Activated B cell treated with CpG ODN at 0.5 μM for 24 hours (primary cell): ENCODE measurements at regions of chr14 and their contacts with region 1.

Region 1: GRCh38 chr14:73491256-73492042 is 716 bp downstream of the RIOX1 start:
- DNase-seq: no peak
- ATAC-seq: peak; percentile 51
- H3K4me3 Mint-ChIP-seq: peak overlapping the region; percentile 88
- H3K27ac Mint-ChIP-seq: peak overlapping the region; percentile 80
- H3K4me1 Mint-ChIP-seq: peaks cover 49% of the 10 kb centered on the region
- H3K27me3 Mint-ChIP-seq: no peaks in the 10 kb centered on the region
- CTCF ChIP-seq: no peak

Region 2: GRCh38 chr14:73136387-73137225 is 354.8 kb before region 1 on chr14 and contains the start of gene PSEN1:
- CTCF ChIA-PET with region 1: no interaction called
- POLR2A ChIA-PET with region 1: interaction called, 3 read pairs
- intact Hi-C with region 1: loop called (anchors 1 kb)
- DNase-seq: peak; percentile 99
- ATAC-seq: peak; percentile 92
- H3K4me3 Mint-ChIP-seq: peak within 1 kb of the TSS; percentile 95
- H3K27ac Mint-ChIP-seq: peak within 1 kb of the TSS; percentile 98
- H3K4me1 Mint-ChIP-seq: peaks cover 33% of the 10 kb centered on the region
- H3K27me3 Mint-ChIP-seq: no peaks in the 10 kb centered on the region
- CTCF ChIP-seq: no peak
- total RNA-seq, gene PSEN1: 38.6 and 42.9 TPM in 2 replicates

Region 3: DNA sequence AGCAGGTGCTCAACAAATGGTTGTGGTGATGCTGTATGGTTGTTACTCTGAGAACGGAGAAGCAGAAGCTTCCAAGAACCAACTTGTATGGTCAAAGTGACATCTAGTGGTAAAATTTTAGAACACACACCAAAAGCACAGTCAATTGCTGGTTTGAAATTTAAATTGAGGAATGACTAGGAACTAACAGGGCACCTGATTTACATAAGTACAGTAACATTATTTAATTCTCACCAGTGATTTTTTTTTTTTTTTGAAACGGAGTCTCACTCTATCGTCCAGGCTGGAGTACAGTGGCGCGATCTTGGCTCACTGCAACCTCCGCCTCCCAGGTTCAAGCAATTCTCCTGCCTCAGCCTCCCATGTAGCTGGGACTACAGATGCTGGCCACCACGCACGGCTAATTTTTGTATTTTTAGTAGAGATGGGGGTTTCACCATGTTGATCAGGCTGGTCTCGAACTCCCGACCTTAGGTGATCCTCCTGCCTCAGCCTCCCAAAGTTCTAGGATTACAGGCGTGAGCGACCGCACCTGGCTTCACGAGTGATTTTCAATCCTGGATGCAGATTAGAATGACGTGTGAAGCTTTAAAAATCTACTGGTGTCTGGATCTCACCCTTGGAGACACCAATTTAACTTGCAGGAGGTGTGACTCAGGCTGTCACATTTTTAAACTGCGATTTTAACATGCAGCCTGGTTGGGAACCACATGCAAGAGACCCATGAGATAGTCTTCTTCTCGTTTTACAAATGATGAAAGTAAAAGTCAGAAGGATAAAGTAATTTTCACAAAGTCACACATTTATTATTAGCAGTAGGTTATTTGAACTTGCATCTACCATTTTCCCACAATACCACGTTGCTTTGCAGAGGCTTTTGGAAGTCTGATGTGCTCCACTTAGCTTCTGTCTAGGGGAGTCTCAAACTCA is 19.0 kb before region 1 on chr14:
- CTCF ChIA-PET with region 1: no interaction called
- POLR2A ChIA-PET with region 1: interaction called, 17 read pairs
- intact Hi-C with region 1: no loop called
- DNase-seq: no peak
- ATAC-seq: peak; percentile 93
- H3K4me3 Mint-ChIP-seq: no peak overlapping the region
- H3K27ac Mint-ChIP-seq: no peak overlapping the region
- H3K4me1 Mint-ChIP-seq: peaks cover 9% of the 10 kb centered on the region
- H3K27me3 Mint-ChIP-seq: no peaks in the 10 kb centered on the region
- CTCF ChIP-seq: no peak

Region 4: DNA sequence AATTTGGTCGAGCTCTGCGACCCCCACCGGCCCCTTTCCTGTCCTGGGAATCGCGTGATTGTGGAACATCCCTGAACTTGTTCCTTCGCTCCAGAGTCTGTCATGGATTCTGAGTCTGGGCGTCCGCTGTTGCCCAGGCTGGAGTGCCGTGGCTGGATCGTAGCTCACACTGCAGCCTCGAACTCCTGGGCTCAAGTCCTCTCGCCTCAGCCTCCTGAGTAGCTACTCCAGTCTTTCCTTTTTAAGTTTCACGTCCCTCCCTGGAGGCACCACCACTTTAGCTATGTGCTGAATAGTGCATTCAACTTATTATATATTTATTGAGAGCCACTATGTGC is 121.6 kb after region 1 on chr14:
- CTCF ChIA-PET with region 1: no interaction called
- POLR2A ChIA-PET with region 1: interaction called, 14 read pairs
- intact Hi-C with region 1: loop called (anchors 2 kb)
- DNase-seq: no peak
- ATAC-seq: no peak
- H3K4me3 Mint-ChIP-seq: peak overlapping the region; percentile 84
- H3K27ac Mint-ChIP-seq: peak overlapping the region; percentile 46
- H3K4me1 Mint-ChIP-seq: peaks cover 3% of the 10 kb centered on the region
- H3K27me3 Mint-ChIP-seq: no peaks in the 10 kb centered on the region
- CTCF ChIP-seq: no peak

Region 5: GRCh38 chr14:73713803-73714655 is 222.6 kb after region 1 on chr14 and contains the start of gene PNMA1:
- CTCF ChIA-PET with region 1: no interaction called
- POLR2A ChIA-PET with region 1: no interaction called
- intact Hi-C with region 1: loop called (anchors 2 kb)
- DNase-seq: peak; percentile 86
- ATAC-seq: peak; percentile 80
- H3K4me3 Mint-ChIP-seq: peak within 1 kb of the TSS; percentile 95
- H3K27ac Mint-ChIP-seq: peak within 1 kb of the TSS; percentile 92
- H3K4me1 Mint-ChIP-seq: peaks cover 25% of the 10 kb centered on the region
- H3K27me3 Mint-ChIP-seq: no peaks in the 10 kb centered on the region
- CTCF ChIP-seq: no peak
- total RNA-seq, gene PNMA1: 19.9 and 22.2 TPM in 2 replicates

Region 6: DNA sequence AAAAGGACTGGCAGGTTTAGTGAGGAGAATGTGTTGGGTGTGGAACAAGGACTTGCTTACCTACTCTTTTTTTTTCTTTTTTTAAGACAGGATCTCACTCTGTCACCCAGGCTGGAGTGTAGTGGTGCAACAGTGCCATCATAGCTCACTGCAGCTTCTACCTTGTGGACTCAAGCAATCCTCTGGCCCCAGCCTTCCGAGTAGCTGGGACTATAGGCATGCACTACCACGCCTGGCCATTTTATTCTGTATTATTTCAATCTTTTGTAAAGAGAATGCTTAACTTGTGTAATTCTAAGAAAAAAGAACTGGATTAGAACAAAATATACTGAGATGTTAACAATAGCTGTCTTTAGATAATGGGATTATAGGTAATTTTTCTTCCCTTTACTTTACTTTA is 854.9 kb after region 1 on chr14:
- CTCF ChIA-PET with region 1: no interaction called
- POLR2A ChIA-PET with region 1: no interaction called
- intact Hi-C with region 1: no loop called
- DNase-seq: no peak
- ATAC-seq: no peak
- H3K4me3 Mint-ChIP-seq: no peak overlapping the region
- H3K27ac Mint-ChIP-seq: no peak overlapping the region
- H3K4me1 Mint-ChIP-seq: no peaks in the 10 kb centered on the region
- H3K27me3 Mint-ChIP-seq: peaks cover 4% of the 10 kb centered on the region
- CTCF ChIP-seq: no peak